Activated naive CD4-positive, alpha-beta T cell treated with anti-CD3 and anti-CD28 coated beads for 36 hours (primary cell): ENCODE measurements at regions of chr12 and their contacts with region 1.

Region 1: GRCh38 chr12:55652352-55652751 is 15.7 kb downstream of the OR10P1 start:
- DNase-seq: peak; percentile 61
- H3K4me3 Mint-ChIP-seq: no peak overlapping the region
- H3K27ac Mint-ChIP-seq: no peak overlapping the region
- H3K4me1 Mint-ChIP-seq: peaks cover 26% of the 10 kb centered on the region
- H3K27me3 Mint-ChIP-seq: no peaks in the 10 kb centered on the region

Region 2: DNA sequence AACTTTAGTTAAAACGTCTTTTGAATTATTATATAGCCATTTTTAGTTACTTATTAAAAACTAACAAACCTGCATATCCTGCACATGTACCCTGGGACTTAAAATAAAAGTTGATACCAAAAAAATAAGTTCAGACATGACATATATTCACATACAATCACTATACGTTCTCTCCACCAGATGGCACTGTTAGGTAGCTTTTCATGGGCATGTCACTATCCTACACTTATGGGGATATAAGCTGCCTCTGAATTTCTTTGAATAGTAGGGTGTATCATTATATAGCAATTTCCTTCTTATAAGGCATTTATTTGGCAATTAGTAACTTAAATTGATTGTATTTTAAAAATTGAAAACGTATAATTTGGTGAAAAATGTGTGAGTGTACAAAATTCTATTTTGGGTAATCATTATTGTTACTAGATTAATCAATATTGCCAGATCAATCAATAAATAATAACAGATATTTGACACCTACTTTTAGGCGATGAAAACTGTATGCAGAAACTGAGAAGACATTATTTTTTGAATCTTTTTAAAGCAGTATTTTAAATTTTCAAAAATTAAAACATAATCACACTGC is 463.3 kb before region 1 on chr12:
- CTCF ChIA-PET with region 1: interaction called, 17 read pairs
- intact Hi-C with region 1: loop called (anchors 1 kb)
- DNase-seq: peak; percentile 70
- H3K4me3 Mint-ChIP-seq: no peak overlapping the region
- H3K27ac Mint-ChIP-seq: no peak overlapping the region
- H3K4me1 Mint-ChIP-seq: no peaks in the 10 kb centered on the region
- H3K27me3 Mint-ChIP-seq: peaks cover 22% of the 10 kb centered on the region

Region 3: GRCh38 chr12:55629058-55629841 is 23.1 kb before region 1 on chr12:
- CTCF ChIA-PET with region 1: interaction called, 36 read pairs
- intact Hi-C with region 1: loop called (anchors 1 kb)
- DNase-seq: peak; percentile 39
- H3K4me3 Mint-ChIP-seq: no peak overlapping the region
- H3K27ac Mint-ChIP-seq: peak overlapping the region; percentile 1
- H3K4me1 Mint-ChIP-seq: peaks cover 20% of the 10 kb centered on the region
- H3K27me3 Mint-ChIP-seq: peaks cover 15% of the 10 kb centered on the region

Region 4: GRCh38 chr12:55636116-55636655 is 16.2 kb before region 1 on chr12:
- CTCF ChIA-PET with region 1: interaction called, 36 read pairs
- intact Hi-C with region 1: no loop called
- DNase-seq: peak; percentile 45
- H3K4me3 Mint-ChIP-seq: no peak overlapping the region
- H3K27ac Mint-ChIP-seq: no peak overlapping the region
- H3K4me1 Mint-ChIP-seq: peaks cover 11% of the 10 kb centered on the region
- H3K27me3 Mint-ChIP-seq: peaks cover 10% of the 10 kb centered on the region